Caco-2 (cell line): ENCODE measurements at regions of chr5 and their contacts with region 1.

Region 1: DNA sequence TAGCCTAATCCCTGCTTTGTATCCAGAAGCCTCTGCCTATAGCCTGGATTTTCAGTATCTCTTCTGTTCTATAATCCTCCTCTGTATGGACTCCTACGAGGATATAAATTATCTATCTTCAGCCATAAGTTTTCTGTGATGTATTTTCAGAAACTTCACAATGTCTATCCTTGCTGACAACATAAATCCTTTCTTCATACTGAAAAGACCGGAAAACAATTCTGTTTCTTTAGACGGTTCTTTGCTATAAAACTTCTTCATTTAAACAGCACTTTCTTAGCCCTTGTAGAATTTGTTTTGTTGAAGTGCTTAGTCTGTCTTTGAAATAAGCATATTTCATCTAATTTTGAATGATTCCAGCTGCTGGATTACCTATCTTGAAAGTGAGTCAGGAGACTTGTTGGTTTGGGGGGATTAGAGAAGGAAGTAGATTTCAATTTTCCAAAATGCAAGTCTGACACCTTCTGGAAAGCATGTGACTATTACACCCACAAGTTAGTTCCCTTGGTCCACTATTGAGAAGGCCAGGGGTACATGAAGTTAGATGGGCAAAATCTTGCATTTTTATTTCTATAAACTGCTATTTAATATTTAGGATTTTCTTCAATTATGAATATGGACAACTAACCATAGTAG is 96.3 kb upstream of the RANBP3L start:
- DNase-seq: peak in 1 of 2 experiments; percentile 48
- H3K4me3 ChIP-seq: no peak overlapping the region
- H3K4me3 Mint-ChIP-seq: no peak overlapping the region
- H3K27ac Mint-ChIP-seq: no peak overlapping the region
- H3K4me1 ChIP-seq: peaks cover 46% of the 10 kb centered on the region
- H3K4me1 Mint-ChIP-seq: peaks cover 35% of the 10 kb centered on the region
- H3K27me3 ChIP-seq: no peaks in the 10 kb centered on the region
- H3K27me3 Mint-ChIP-seq: no peaks in the 10 kb centered on the region
- CTCF ChIP-seq: peak; percentile 50 to 64

Region 2: GRCh38 chr5:36177715-36178523 is 220.1 kb before region 1 on chr5:
- CTCF ChIA-PET with region 1: no interaction called
- POLR2A ChIA-PET with region 1: no interaction called
- intact Hi-C with region 1: loop called (anchors 1 kb)
- DNase-seq: peak in 1 of 2 experiments; percentile 24
- H3K4me3 ChIP-seq: no peak overlapping the region
- H3K4me3 Mint-ChIP-seq: no peak overlapping the region
- H3K27ac Mint-ChIP-seq: no peak overlapping the region
- H3K4me1 ChIP-seq: peaks cover 27% of the 10 kb centered on the region
- H3K4me1 Mint-ChIP-seq: peaks cover 44% of the 10 kb centered on the region
- H3K27me3 ChIP-seq: no peaks in the 10 kb centered on the region
- H3K27me3 Mint-ChIP-seq: no peaks in the 10 kb centered on the region
- CTCF ChIP-seq: peak; percentile 50 to 61

Region 3: DNA sequence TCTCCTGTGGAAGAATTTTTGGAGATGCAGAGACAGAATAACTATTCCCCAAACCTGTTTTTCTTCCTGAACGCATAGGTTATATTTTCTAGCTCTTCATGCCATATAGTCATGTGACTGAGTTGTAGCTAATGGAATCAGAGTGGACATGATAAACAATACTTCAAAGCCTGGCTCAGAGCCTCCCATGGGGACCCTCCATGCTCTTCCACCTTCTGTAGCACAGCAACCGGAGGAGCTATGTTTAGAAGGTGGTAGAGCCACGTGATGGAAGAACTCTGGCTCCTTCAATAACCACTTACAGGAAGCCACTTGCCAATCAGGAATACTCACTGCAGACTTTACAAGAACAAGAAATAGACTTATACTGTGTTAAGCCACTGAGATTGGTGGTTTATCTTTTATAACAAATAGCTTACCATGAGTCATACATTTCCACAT is 195.5 kb before region 1 on chr5:
- CTCF ChIA-PET with region 1: no interaction called
- POLR2A ChIA-PET with region 1: no interaction called
- intact Hi-C with region 1: no loop called
- DNase-seq: no peak
- H3K4me3 ChIP-seq: no peak overlapping the region
- H3K4me3 Mint-ChIP-seq: no peak overlapping the region
- H3K27ac Mint-ChIP-seq: no peak overlapping the region
- H3K4me1 ChIP-seq: no peaks in the 10 kb centered on the region
- H3K4me1 Mint-ChIP-seq: no peaks in the 10 kb centered on the region
- H3K27me3 ChIP-seq: no peaks in the 10 kb centered on the region
- H3K27me3 Mint-ChIP-seq: no peaks in the 10 kb centered on the region
- CTCF ChIP-seq: no peak

Region 4: GRCh38 chr5:36264202-36264760 is 133.7 kb before region 1 on chr5:
- CTCF ChIA-PET with region 1: interaction called, 3 read pairs
- POLR2A ChIA-PET with region 1: no interaction called
- intact Hi-C with region 1: loop called (anchors 1 kb)
- DNase-seq: no peak
- H3K4me3 ChIP-seq: no peak overlapping the region
- H3K4me3 Mint-ChIP-seq: no peak overlapping the region
- H3K27ac Mint-ChIP-seq: no peak overlapping the region
- H3K4me1 ChIP-seq: no peaks in the 10 kb centered on the region
- H3K4me1 Mint-ChIP-seq: no peaks in the 10 kb centered on the region
- H3K27me3 ChIP-seq: no peaks in the 10 kb centered on the region
- H3K27me3 Mint-ChIP-seq: no peaks in the 10 kb centered on the region
- CTCF ChIP-seq: no peak

Region 5: DNA sequence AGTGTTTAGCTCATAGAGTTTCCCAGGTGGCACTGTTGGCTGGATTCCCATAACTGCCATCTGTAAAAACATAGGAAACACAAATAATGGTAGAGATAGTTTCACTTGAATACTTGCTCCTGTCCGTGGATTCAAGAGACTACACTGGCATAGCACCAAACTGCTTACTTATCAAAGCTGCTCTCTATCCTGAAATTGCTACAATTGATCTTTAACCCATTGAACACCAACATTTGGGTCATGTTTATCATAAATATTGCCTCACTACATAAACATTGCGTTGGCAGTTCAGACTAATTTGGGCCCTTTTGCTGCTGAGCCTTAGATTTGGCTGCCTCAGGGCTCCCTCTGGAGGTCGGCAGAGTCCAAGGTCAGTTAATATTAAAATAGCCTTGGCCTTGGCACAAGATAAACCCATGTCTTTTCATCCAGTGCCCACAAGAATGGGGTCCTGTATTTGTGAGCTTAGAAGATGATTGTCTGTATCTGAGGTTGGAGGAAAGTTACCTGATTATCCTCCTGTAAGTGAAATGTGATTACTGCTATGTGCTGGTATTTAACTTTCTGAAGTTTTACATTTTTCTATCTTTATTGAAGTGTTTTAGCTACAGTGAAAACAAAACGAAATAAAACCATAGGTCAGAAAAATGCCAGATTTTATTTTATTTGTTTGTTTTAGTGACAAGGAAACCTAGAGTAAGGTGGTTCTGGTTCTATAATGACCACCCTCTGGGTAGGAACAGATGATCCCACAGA is 92.3 kb before region 1 on chr5:
- CTCF ChIA-PET with region 1: no interaction called
- POLR2A ChIA-PET with region 1: no interaction called
- intact Hi-C with region 1: loop called (anchors 1 kb)
- DNase-seq: peak in 1 of 2 experiments; percentile 59
- H3K4me3 ChIP-seq: no peak overlapping the region
- H3K4me3 Mint-ChIP-seq: no peak overlapping the region
- H3K27ac Mint-ChIP-seq: no peak overlapping the region
- H3K4me1 ChIP-seq: peaks cover 19% of the 10 kb centered on the region
- H3K4me1 Mint-ChIP-seq: peaks cover 13% of the 10 kb centered on the region
- H3K27me3 ChIP-seq: no peaks in the 10 kb centered on the region
- H3K27me3 Mint-ChIP-seq: no peaks in the 10 kb centered on the region
- CTCF ChIP-seq: peak; percentile 55 to 72